Dendritic cell treated with granulocyte-macrophage colony-stimulating factor and Interleukin-4, amounts not matched to agents 40 ng/mL and 50 ng/mL, for 4 days (primary cell): ENCODE measurements at regions of chr17 and their contacts with region 1.

Region 1: DNA sequence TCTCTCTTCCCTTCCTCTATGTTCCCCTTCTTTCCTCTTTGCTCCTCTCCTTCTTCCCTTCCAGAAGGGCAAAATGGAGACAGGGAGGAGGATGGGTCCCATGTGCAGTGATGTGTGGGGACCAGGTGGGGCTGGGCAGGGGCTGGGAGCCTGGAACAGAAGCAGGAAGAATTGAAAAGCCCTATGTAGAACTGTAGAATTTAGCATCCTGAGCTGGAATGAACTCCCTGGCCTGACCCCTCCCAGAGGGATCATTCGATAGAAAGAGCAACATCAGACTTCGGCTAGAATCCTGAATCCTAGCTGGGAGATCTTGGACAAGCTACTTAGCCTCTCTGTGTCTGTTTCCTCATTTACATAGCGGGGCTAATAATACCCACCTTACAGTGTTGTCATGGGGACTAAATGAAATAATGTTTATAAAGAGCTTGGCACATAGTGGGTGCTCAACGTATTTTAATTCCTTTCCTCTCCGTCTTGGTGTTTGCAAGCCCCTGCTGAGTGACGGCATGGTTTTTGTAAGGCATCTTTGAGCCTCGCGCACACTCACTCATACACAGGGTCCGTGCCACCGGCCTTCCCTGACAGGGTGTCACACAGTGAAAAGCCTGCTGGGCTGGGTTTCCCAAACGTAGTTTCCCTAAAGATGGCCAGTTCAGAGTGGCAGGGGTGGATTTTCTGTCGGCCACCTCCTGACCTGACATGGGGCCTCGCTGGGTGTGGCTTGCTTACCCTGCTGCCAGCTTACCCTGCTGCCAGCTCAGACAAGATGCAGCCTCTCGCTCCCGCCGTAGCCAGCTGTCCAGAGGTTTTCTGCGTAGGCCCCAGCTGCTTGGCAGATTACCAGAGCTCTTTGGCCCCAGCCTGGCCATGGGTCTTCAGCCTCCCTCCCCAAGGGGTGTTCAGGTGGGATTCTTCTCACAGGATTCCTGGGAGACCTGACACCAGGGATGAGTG is 6.1 kb upstream of the ARHGAP23 start:
- H3K4me3 Mint-ChIP-seq: no peak overlapping the region
- H3K27ac Mint-ChIP-seq: no peak overlapping the region
- H3K4me1 Mint-ChIP-seq: peaks cover 36% of the 10 kb centered on the region
- H3K27me3 Mint-ChIP-seq: peaks cover 86% of the 10 kb centered on the region

Region 2: DNA sequence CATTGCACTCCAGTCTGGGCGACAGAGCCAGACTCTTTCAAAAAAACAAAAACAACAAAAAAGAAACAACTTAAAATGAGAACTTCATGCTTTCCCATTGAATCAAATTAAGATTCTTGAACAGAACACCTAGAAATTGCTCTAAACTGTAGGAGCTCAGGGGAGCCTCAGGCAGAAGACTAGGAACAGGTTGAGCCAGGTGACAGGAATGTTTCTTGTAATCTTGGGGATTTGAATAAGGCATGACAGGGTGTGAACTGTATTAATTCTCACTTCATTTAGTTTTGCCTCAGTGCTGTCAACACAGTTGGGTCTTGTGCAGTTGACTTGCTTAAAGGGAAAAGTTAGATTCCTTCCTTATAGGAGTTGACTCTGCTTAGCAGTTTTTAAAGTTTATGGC is 42.7 kb before region 1 on chr17:
- intact Hi-C with region 1: no loop called
- H3K4me3 Mint-ChIP-seq: no peak overlapping the region
- H3K27ac Mint-ChIP-seq: no peak overlapping the region
- H3K4me1 Mint-ChIP-seq: peaks cover 5% of the 10 kb centered on the region
- H3K27me3 Mint-ChIP-seq: no peaks in the 10 kb centered on the region

Region 3: GRCh38 chr17:38485146-38485468 is 63.0 kb after region 1 on chr17:
- intact Hi-C with region 1: loop called (anchors 2 kb)
- H3K4me3 Mint-ChIP-seq: no peak overlapping the region
- H3K27ac Mint-ChIP-seq: no peak overlapping the region
- H3K4me1 Mint-ChIP-seq: peaks cover 10% of the 10 kb centered on the region
- H3K27me3 Mint-ChIP-seq: peaks cover 2% of the 10 kb centered on the region

Region 4: GRCh38 chr17:38674749-38675615 is 252.8 kb after region 1 on chr17 and contains the start of gene EPOP:
- intact Hi-C with region 1: no loop called
- H3K4me3 Mint-ChIP-seq: peak within 1 kb of the TSS; percentile 76
- H3K27ac Mint-ChIP-seq: peak within 1 kb of the TSS; percentile 68
- H3K4me1 Mint-ChIP-seq: peaks cover 76% of the 10 kb centered on the region
- H3K27me3 Mint-ChIP-seq: peaks cover 39% of the 10 kb centered on the region